ENCODE measurements at regions of chr5 and their contacts with region 1.

Region 1: DNA sequence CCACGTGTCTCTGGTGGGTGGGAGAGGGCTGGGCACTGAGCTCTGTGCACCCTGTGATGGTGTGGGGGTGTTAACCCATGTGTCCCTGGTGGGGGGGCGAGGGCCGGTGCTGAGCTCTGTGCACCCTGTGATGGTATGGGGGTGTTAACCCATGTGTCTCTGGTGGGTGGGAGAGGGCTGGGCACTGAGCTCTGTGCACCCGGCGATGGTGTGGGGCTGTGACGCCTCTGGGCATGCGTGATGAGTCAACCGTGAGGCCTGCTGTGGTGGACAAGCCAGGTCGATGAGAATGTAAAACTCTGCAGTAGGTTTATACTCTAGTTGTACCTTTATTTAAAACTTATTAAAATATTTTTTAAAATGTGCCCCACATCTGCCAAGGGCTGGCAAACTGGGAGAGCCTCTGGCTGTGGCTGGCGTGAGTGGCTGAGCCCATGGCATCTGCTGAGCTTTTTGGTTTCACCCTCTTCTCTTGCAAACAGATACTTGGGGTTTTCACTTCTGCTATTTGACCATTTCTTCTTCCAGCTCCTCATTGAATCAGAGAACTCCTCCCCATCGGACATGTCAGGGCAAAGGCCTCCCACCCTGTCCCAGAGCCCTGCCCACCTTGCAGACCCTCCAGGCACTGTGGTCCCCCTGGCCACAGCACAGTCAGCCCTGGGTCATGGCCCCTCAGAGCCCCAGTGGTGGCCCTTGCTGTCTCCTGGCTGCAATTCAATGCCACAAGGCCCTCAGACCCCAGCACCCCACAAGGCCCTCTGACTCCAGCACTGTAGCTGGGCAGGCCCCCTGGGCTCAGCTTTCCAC is 18.5 kb upstream of the EXOC3 start:
- DNase-seq: no peak
- H3K4me3 ChIP-seq: no peak overlapping the region
- H3K27ac ChIP-seq: no peak overlapping the region
- H3K4me1 ChIP-seq: peaks cover 0 to 23% (median 0%) of the 10 kb centered on the region in 4 experiments
- H3K27me3 ChIP-seq: no peaks in the 10 kb centered on the region

Region 2: GRCh38 chr5:317086-317811 is 107.3 kb before region 1 on chr5:
- CTCF ChIA-PET with region 1: interaction called, 124 read pairs
- POLR2A ChIA-PET with region 1: interaction called, 5 read pairs
- DNase-seq: peak; percentile 38 to 61 (median 56)
- H3K4me3 ChIP-seq: no peak overlapping the region
- H3K27ac ChIP-seq: no peak overlapping the region
- H3K4me1 ChIP-seq: peaks cover 0 to 38% (median 18%) of the 10 kb centered on the region in 4 experiments
- H3K27me3 ChIP-seq: peaks cover 0 to 41% (median 18%) of the 10 kb centered on the region in 5 experiments

Region 3: GRCh38 chr5:1673042-1673677 is 1248.7 kb after region 1 on chr5:
- CTCF ChIA-PET with region 1: no interaction called
- POLR2A ChIA-PET with region 1: no interaction called
- DNase-seq: peak; percentile 35 to 69 (median 65)
- H3K4me3 ChIP-seq: no peak overlapping the region
- H3K27ac ChIP-seq: no peak overlapping the region
- H3K4me1 ChIP-seq: peaks cover 0 to 5% (median 0%) of the 10 kb centered on the region in 4 experiments
- H3K27me3 ChIP-seq: peaks cover 7 to 59% (median 15%) of the 10 kb centered on the region in 5 experiments

Measured in common myeloid progenitor, CD34-positive (primary cell).